CD8-positive, alpha-beta T cell (primary cell): ENCODE measurements at regions of chr12 and their contacts with region 1.

Region 1: DNA sequence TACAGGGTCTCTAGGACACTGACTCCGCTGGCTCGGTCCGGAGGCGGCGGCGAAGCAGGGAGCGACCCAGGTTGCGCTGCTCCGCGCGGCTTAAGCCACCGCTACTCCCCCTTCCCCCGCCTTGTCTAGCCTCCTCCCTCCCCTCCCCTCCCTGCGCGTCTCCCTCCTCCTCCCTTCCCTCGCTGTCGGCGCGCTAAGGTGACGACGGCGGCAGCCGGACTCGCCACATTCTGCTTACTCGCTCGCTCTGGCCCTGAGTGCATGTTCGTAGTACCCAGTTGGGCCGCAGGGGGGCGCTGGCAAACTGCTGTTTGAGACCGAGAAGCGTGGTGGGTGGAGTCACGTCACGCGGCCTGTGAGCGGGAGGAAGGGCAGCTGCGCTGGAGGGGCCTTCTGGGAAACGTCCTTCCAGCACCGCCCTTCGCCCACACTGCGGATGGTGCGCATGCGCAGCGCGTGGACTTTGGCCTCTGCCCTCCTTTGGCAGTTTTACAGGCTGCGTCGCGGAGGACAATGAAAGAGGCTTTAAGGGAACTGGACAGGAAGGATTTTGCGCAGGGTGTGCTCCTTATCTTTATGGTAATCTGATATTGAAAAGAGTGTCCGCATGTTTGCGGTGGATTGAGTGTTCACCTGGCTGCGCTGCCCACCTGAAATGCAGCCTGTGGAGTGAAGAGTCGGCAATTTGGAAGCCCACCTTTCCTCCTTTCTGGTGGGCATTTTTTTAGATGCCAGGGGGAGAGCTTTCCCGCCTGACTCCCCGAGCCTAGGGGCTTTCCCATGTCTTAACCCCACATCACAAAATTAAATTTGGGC is at the start of gene SCAF11:
- DNase-seq: peak; percentile 100
- ATAC-seq: peak; percentile 80
- H3K4me3 ChIP-seq: peak within 1 kb of the TSS; percentile 89 to 95
- H3K4me3 Mint-ChIP-seq: peak within 1 kb of the TSS; percentile 93
- H3K27ac ChIP-seq: peak within 1 kb of the TSS; percentile 97
- H3K27ac Mint-ChIP-seq: peak within 1 kb of the TSS; percentile 97
- H3K4me1 ChIP-seq: peaks cover 42% of the 10 kb centered on the region
- H3K4me1 Mint-ChIP-seq: peaks cover 51% of the 10 kb centered on the region
- H3K27me3 ChIP-seq: no peaks in the 10 kb centered on the region
- H3K27me3 Mint-ChIP-seq: no peaks in the 10 kb centered on the region
- CTCF ChIP-seq: peak; percentile 75
- total RNA-seq, gene SCAF11: 204 to 218 TPM

Region 2: DNA sequence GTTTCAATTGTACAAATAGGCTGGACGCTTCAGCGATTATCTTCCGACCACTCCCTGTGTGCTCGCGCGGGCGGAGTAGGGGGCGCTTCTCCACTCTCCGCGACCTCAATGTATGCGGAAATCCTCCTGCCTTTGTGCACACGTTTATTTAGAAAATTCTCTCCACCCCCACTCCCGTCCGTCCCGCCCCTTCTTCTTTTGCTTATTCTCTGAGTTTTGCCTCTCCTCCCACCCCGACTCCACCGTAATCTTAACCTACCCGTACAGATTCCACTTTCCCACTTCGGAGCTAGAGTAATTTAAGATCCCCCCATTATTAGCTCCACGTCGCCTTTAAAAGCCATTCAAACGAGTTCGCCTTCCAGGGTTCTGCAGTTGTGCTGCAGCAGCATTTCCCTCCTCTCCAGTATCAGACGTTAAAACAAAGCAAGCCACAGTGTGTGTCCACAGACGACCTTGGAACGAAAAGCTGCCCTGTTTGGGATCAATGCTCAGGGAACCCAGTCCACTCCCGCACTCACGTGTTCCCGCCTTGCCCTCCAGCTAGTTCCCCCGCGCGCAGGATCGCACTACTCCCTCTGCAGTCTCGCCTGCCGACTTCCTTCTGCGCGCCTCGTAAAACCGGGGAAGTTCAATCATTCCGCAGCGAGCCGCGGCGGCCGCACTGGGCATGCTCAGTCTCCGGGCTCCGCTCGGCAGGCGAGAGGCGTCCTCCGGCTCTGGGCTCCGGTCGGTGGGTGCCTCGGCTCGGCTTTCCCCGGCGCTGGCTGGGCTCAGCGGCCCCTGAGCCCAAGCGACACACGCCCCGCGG is 775.1 kb before region 1 on chr12 and contains the start of gene ANO6:
- CTCF ChIA-PET with region 1: no interaction called
- POLR2A ChIA-PET with region 1: no interaction called
- intact Hi-C with region 1: loop called (anchors 5 kb)
- DNase-seq: peak; percentile 37 to 87 (median 72)
- ATAC-seq: peak; percentile 74
- H3K4me3 ChIP-seq: peak within 1 kb of the TSS; percentile 79 to 89
- H3K4me3 Mint-ChIP-seq: peak within 1 kb of the TSS; percentile 94
- H3K27ac ChIP-seq: peak within 1 kb of the TSS; percentile 51 to 78
- H3K27ac Mint-ChIP-seq: peak within 1 kb of the TSS; percentile 92
- H3K4me1 ChIP-seq: peaks cover 24% of the 10 kb centered on the region
- H3K4me1 Mint-ChIP-seq: peaks cover 45% of the 10 kb centered on the region
- H3K27me3 ChIP-seq: no peaks in the 10 kb centered on the region
- H3K27me3 Mint-ChIP-seq: no peaks in the 10 kb centered on the region
- CTCF ChIP-seq: no peak
- total RNA-seq, gene ANO6: 7.4 to 7.5 TPM

Region 3: GRCh38 chr12:45458854-45459807 is 531.5 kb before region 1 on chr12:
- CTCF ChIA-PET with region 1: no interaction called
- POLR2A ChIA-PET with region 1: no interaction called
- intact Hi-C with region 1: no loop called
- DNase-seq: no peak
- ATAC-seq: no peak
- H3K4me3 ChIP-seq: no peak overlapping the region
- H3K4me3 Mint-ChIP-seq: no peak overlapping the region
- H3K27ac ChIP-seq: no peak overlapping the region
- H3K27ac Mint-ChIP-seq: no peak overlapping the region
- H3K4me1 ChIP-seq: no peaks in the 10 kb centered on the region
- H3K4me1 Mint-ChIP-seq: no peaks in the 10 kb centered on the region
- H3K27me3 ChIP-seq: no peaks in the 10 kb centered on the region
- H3K27me3 Mint-ChIP-seq: peaks cover 10% of the 10 kb centered on the region
- CTCF ChIP-seq: no peak

Region 4: DNA sequence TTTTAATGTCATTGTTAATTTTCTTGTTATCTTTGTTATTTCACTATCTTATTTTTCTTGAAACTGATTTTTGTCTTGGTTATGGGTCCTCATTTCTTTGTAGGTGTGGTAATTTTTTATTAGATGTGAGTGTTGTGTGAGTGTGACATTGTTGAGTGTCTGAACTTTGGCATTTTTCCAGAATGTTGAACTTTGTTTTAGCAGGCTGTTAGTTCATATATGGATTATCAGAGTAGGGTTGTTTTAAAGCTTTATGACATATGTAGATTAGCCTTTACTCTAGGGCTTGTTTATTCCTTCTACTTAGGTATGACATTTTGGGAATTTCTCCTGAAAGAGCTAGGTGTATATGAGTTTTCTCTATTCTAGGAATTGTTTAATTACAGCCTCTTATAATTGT is 157.3 kb before region 1 on chr12:
- CTCF ChIA-PET with region 1: no interaction called
- POLR2A ChIA-PET with region 1: no interaction called
- intact Hi-C with region 1: no loop called
- DNase-seq: no peak
- ATAC-seq: no peak
- H3K4me3 ChIP-seq: no peak overlapping the region
- H3K4me3 Mint-ChIP-seq: no peak overlapping the region
- H3K27ac ChIP-seq: no peak overlapping the region
- H3K27ac Mint-ChIP-seq: no peak overlapping the region
- H3K4me1 ChIP-seq: no peaks in the 10 kb centered on the region
- H3K4me1 Mint-ChIP-seq: peaks cover 7% of the 10 kb centered on the region
- H3K27me3 ChIP-seq: no peaks in the 10 kb centered on the region
- H3K27me3 Mint-ChIP-seq: no peaks in the 10 kb centered on the region
- CTCF ChIP-seq: no peak

Region 5: GRCh38 chr12:46071769-46072624 is 81.3 kb after region 1 on chr12:
- CTCF ChIA-PET with region 1: no interaction called
- POLR2A ChIA-PET with region 1: no interaction called
- intact Hi-C with region 1: loop called (anchors 1 to 2 kb)
- DNase-seq: peak; percentile 27 to 75 (median 57)
- ATAC-seq: peak; percentile 89
- H3K4me3 ChIP-seq: no peak overlapping the region
- H3K4me3 Mint-ChIP-seq: no peak overlapping the region
- H3K27ac ChIP-seq: no peak overlapping the region
- H3K27ac Mint-ChIP-seq: no peak overlapping the region
- H3K4me1 ChIP-seq: no peaks in the 10 kb centered on the region
- H3K4me1 Mint-ChIP-seq: no peaks in the 10 kb centered on the region
- H3K27me3 ChIP-seq: no peaks in the 10 kb centered on the region
- H3K27me3 Mint-ChIP-seq: peaks cover 7% of the 10 kb centered on the region
- CTCF ChIP-seq: peak; percentile 88

Region 6: GRCh38 chr12:46209914-46210872 is 219.5 kb after region 1 on chr12:
- CTCF ChIA-PET with region 1: no interaction called
- POLR2A ChIA-PET with region 1: no interaction called
- intact Hi-C with region 1: loop called (anchors 5 kb)
- DNase-seq: peak in 8 of 9 experiments; percentile 39 to 84 (median 66)
- ATAC-seq: peak; percentile 63
- H3K4me3 ChIP-seq: no peak overlapping the region
- H3K4me3 Mint-ChIP-seq: peak overlapping the region; percentile 69
- H3K27ac ChIP-seq: peak overlapping the region; percentile 38 to 83
- H3K27ac Mint-ChIP-seq: peak overlapping the region; percentile 94
- H3K4me1 ChIP-seq: peaks cover 85% of the 10 kb centered on the region
- H3K4me1 Mint-ChIP-seq: peaks cover 95% of the 10 kb centered on the region
- H3K27me3 ChIP-seq: no peaks in the 10 kb centered on the region
- H3K27me3 Mint-ChIP-seq: no peaks in the 10 kb centered on the region
- CTCF ChIP-seq: no peak

Region 7: GRCh38 chr12:46303039-46303666 is 312.5 kb after region 1 on chr12:
- CTCF ChIA-PET with region 1: no interaction called
- POLR2A ChIA-PET with region 1: no interaction called
- intact Hi-C with region 1: loop called (anchors 1 to 2 kb)
- DNase-seq: peak; percentile 7 to 84 (median 59)
- ATAC-seq: peak; percentile 81
- H3K4me3 ChIP-seq: no peak overlapping the region
- H3K4me3 Mint-ChIP-seq: no peak overlapping the region
- H3K27ac ChIP-seq: no peak overlapping the region
- H3K27ac Mint-ChIP-seq: no peak overlapping the region
- H3K4me1 ChIP-seq: peaks cover 4% of the 10 kb centered on the region
- H3K4me1 Mint-ChIP-seq: peaks cover 21% of the 10 kb centered on the region
- H3K27me3 ChIP-seq: no peaks in the 10 kb centered on the region
- H3K27me3 Mint-ChIP-seq: no peaks in the 10 kb centered on the region
- CTCF ChIP-seq: peak; percentile 87

Region 8: GRCh38 chr12:47216150-47216677 is 1225.5 kb after region 1 on chr12:
- CTCF ChIA-PET with region 1: no interaction called
- POLR2A ChIA-PET with region 1: no interaction called
- intact Hi-C with region 1: loop called in 1 of 2 experiments (anchors 10 kb)
- DNase-seq: peak; percentile 28 to 92 (median 73)
- ATAC-seq: peak; percentile 46
- H3K4me3 ChIP-seq: peak overlapping the region; percentile 75 to 80
- H3K4me3 Mint-ChIP-seq: peak overlapping the region; percentile 95
- H3K27ac ChIP-seq: peak overlapping the region; percentile 74 to 81
- H3K27ac Mint-ChIP-seq: peak overlapping the region; percentile 96
- H3K4me1 ChIP-seq: peaks cover 5% of the 10 kb centered on the region
- H3K4me1 Mint-ChIP-seq: peaks cover 30% of the 10 kb centered on the region
- H3K27me3 ChIP-seq: no peaks in the 10 kb centered on the region
- H3K27me3 Mint-ChIP-seq: no peaks in the 10 kb centered on the region
- CTCF ChIP-seq: no peak

Region 9: DNA sequence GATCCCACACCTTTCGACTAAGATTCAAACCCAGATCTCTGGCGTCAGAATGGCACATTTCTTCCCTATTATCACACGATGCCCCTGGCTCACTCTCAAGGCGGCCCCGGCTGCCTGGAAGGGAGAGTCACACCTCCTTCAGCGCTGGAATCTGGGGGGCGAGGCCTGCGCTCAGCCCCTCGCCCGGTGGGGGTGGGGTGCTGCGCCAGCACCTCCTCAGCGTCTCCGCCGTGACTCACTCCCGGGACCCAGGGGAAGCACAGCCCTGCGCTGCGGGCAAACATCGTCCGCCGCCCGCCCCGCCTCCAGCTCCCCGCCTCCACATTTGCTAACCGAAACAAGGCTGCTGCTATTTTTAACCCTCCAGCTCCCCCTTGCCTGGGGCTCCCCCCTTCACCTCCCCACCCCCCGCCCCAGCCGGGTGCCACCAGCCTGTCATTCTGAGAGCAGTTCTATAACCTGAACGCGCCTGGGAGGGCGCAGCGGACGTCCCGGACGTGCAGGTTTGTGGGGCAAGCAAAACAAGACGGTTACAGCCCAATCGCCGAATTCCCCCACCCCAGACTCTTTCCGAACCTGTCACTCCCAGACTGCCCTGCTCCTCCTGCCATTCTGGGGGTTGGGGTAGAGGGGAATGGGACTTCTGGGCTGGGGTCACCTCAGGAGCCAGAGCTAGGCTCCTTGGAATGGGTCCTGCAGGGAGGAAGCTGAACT is 1822.3 kb after region 1 on chr12:
- CTCF ChIA-PET with region 1: no interaction called
- POLR2A ChIA-PET with region 1: no interaction called
- intact Hi-C with region 1: loop called in 1 of 2 experiments (anchors 5 kb)
- DNase-seq: peak; percentile 77 to 95 (median 92)
- ATAC-seq: peak; percentile 73
- H3K4me3 ChIP-seq: peak overlapping the region; percentile 44 to 59
- H3K4me3 Mint-ChIP-seq: peak overlapping the region; percentile 82
- H3K27ac ChIP-seq: peak overlapping the region; percentile 65 to 73
- H3K27ac Mint-ChIP-seq: peak overlapping the region; percentile 97
- H3K4me1 ChIP-seq: peaks cover 95% of the 10 kb centered on the region
- H3K4me1 Mint-ChIP-seq: peaks cover 93% of the 10 kb centered on the region
- H3K27me3 ChIP-seq: no peaks in the 10 kb centered on the region
- H3K27me3 Mint-ChIP-seq: no peaks in the 10 kb centered on the region
- CTCF ChIP-seq: no peak